H1 (cell line): ENCODE measurements at regions of chr4 and their contacts with region 1.

Region 1: DNA sequence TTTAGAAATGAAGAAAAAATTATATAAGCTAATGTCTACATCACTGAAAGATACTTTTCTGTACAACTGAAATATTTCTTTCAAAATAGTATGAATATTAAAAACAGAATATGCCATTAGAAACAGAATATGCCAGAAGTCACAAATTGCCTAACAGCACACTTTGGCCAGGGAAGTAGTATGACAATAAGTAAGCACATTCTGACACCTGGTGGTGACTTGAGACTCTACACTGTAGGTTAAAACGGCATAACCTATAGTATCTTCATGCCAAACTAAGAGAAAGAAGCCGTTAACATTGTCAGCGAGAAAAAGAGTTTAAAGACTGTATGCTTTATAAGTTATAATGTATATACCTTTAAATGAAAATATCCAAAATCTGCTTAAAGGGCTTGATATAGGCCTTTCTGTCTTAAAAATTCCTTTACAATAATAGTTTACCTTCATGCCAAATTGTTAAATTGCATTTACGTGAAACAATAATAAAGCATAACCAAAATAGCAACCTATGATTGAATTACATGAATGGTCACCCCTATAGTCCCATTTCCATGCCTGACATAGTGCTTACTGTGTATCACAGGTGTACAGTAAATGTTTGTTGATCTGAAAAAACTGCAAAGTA is 32.8 kb downstream of the FAM13A start:
- DNase-seq: no peak
- H3K4me3 ChIP-seq: no peak overlapping the region
- H3K27ac ChIP-seq: no peak overlapping the region
- H3K4me1 ChIP-seq: no peaks in the 10 kb centered on the region
- H3K27me3 ChIP-seq: no peaks in the 10 kb centered on the region
- CTCF ChIP-seq: peak in 2 of 3 experiments; percentile 71 to 74; a peak in 3 of 4 replicates
- EP300 ChIP-seq: no peak
- POLR2A ChIP-seq: no peak
- RAD21 ChIP-seq: peak; percentile 95

Region 2: GRCh38 chr4:88818631-88819470 is 205.3 kb before region 1 on chr4:
- CTCF ChIA-PET with region 1: interaction called, 224 read pairs
- POLR2A ChIA-PET with region 1: interaction called, 5 read pairs
- DNase-seq: peak in 1 of 2 experiments; percentile 54
- H3K4me3 ChIP-seq: no peak overlapping the region
- H3K27ac ChIP-seq: no peak overlapping the region
- H3K4me1 ChIP-seq: peaks cover 0 to 8% (median 4%) of the 10 kb centered on the region in 4 experiments; a peak in 5 of 7 replicates
- H3K27me3 ChIP-seq: no peaks in the 10 kb centered on the region
- CTCF ChIP-seq: peak; percentile 36 to 85 (median 73)
- EP300 ChIP-seq: no peak
- POLR2A ChIP-seq: no peak
- RAD21 ChIP-seq: peak; percentile 94 to 97

Region 3: DNA sequence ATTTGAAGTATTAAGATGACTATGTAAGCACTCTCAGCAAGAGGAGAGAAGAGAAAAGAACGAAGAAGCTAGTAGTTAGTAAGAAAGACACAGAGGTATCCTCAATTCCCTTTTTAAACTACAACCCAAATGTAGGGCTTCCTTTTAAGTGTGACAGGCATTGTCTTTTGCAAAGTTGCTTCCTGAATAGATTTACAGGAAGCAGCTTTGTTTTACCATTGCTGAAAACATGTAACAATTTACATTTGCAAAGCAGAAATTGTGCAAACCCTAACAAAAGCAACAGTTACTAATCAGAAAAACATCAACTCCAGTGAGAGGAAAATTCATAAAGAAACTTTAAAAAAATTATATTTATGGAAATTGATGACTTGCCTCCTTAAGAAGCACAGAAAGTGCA is 63.6 kb before region 1 on chr4:
- CTCF ChIA-PET with region 1: no interaction called
- POLR2A ChIA-PET with region 1: no interaction called
- DNase-seq: no peak
- H3K4me3 ChIP-seq: peak overlapping the region in 1 of 4 experiments; percentile 22; a peak in 1 of 8 replicates
- H3K27ac ChIP-seq: no peak overlapping the region
- H3K4me1 ChIP-seq: peaks cover 0 to 8% (median 4%) of the 10 kb centered on the region in 4 experiments; a peak in 5 of 7 replicates
- H3K27me3 ChIP-seq: no peaks in the 10 kb centered on the region
- CTCF ChIP-seq: no peak
- EP300 ChIP-seq: no peak
- POLR2A ChIP-seq: no peak
- RAD21 ChIP-seq: no peak

Region 4: DNA sequence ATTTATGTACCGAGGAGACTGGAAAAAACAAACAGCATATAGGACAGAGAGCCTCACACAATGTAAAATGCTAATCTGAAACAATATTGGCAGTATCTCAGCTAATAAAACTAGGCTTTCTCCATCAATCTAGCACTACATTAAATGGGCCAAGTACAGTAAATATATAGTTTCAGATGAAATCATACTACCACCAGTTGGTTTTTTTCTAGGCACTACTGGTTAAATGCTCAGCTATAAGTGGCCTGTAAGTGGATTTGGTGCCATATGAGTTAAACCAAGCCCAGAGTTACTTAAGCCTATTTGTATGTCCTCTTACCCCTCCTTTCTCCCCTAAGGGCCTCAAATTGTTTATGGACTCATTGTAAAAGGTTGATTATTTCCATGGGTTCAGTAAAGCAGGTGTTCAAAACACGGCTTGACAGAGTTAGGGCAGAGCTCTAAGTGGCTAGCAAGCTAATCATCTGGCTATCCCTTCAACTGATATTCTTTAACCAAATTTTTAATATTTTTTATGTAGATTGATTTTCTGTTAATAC is 24.7 kb before region 1 on chr4:
- CTCF ChIA-PET with region 1: interaction called, 18 read pairs
- POLR2A ChIA-PET with region 1: no interaction called
- DNase-seq: no peak
- H3K4me3 ChIP-seq: no peak overlapping the region
- H3K27ac ChIP-seq: no peak overlapping the region
- H3K4me1 ChIP-seq: no peaks in the 10 kb centered on the region; a peak in 1 of 7 replicates
- H3K27me3 ChIP-seq: no peaks in the 10 kb centered on the region
- CTCF ChIP-seq: no peak
- EP300 ChIP-seq: no peak
- POLR2A ChIP-seq: no peak
- RAD21 ChIP-seq: no peak

Region 5: GRCh38 chr4:89056953-89057398 is 32.8 kb after region 1 on chr4 and contains the start of gene FAM13A:
- CTCF ChIA-PET with region 1: no interaction called
- POLR2A ChIA-PET with region 1: no interaction called
- DNase-seq: peak; percentile 27 to 60
- H3K4me3 ChIP-seq: peak within 1 kb of the TSS; percentile 55 to 98 (median 66)
- H3K27ac ChIP-seq: peak within 1 kb of the TSS; percentile 40; the same call in 1 of the 2 replicates
- H3K4me1 ChIP-seq: no peaks in the 10 kb centered on the region; a peak in 3 of 7 replicates
- H3K27me3 ChIP-seq: no peaks in the 10 kb centered on the region
- CTCF ChIP-seq: no peak
- EP300 ChIP-seq: no peak
- POLR2A ChIP-seq: peak; percentile 69 to 92
- RAD21 ChIP-seq: no peak
- total RNA-seq, gene FAM13A: 16.2 and 16.5 TPM in 2 replicates

Region 6: GRCh38 chr4:89123451-89123851 is 99.3 kb after region 1 on chr4:
- CTCF ChIA-PET with region 1: no interaction called
- POLR2A ChIA-PET with region 1: no interaction called
- DNase-seq: no peak
- H3K4me3 ChIP-seq: no peak overlapping the region; a peak in 1 of 8 replicates
- H3K27ac ChIP-seq: no peak overlapping the region
- H3K4me1 ChIP-seq: no peaks in the 10 kb centered on the region
- H3K27me3 ChIP-seq: no peaks in the 10 kb centered on the region
- CTCF ChIP-seq: no peak
- EP300 ChIP-seq: no peak
- POLR2A ChIP-seq: no peak
- RAD21 ChIP-seq: no peak